ENCODE measurements at regions of chr21 and their contacts with region 1.

Region 1: DNA sequence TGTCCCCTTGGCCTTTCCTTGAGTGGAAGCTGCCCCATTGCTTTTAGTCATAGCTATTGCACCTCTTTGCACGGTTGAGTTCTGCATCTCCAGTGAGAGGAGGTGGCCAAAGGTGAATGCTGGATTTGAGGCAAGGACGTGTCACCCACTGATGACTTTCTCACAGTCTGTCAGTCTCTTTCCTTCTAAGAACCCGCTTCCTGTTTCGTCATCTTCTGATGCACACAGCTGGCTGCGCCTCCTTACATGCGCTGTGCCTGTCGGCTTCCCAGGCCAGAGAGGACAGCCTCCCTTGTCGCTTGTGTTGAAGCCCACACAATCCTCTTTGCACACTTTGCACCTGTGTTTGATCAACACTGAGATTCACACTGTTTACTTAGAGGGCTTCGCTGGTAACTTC is 41.8 kb upstream of the PWP2 start:
- DNase-seq: peak; percentile 85
- H3K4me3 Mint-ChIP-seq: peak overlapping the region; percentile 48
- H3K27ac Mint-ChIP-seq: peak overlapping the region; percentile 84
- H3K4me1 Mint-ChIP-seq: peaks cover 33% of the 10 kb centered on the region
- H3K27me3 Mint-ChIP-seq: no peaks in the 10 kb centered on the region

Region 2: GRCh38 chr21:43916691-43917514 is 148.5 kb before region 1 on chr21:
- CTCF ChIA-PET with region 1: no interaction called
- POLR2A ChIA-PET with region 1: no interaction called
- intact Hi-C with region 1: no loop called
- DNase-seq: peak; percentile 76
- H3K4me3 Mint-ChIP-seq: peak overlapping the region; percentile 68
- H3K27ac Mint-ChIP-seq: peak overlapping the region; percentile 76
- H3K4me1 Mint-ChIP-seq: peaks cover 52% of the 10 kb centered on the region
- H3K27me3 Mint-ChIP-seq: no peaks in the 10 kb centered on the region

Region 3: DNA sequence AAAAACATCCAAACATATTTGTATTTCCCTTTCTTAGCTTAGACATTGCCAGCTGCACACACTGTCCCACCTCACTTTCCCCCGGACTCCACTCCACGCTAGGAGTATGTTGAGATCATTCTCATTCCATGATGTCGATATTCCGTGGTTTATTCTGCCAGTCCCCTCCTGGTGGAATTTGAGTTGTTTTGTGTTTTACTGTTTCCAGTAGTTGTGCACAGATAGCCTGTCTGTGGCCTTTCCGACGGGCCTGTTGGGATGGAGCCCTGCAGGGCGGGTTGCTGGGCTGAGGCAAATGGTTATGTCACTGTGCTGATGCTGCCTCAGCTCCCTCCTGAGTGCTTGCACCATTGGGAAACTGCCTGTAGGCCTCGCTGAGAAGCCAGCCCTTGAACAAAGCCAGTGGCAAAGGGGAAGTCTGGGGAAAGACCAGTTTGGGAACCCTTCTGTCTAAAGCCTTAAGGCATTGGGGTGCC is 40.5 kb before region 1 on chr21:
- CTCF ChIA-PET with region 1: interaction called, 3 read pairs
- POLR2A ChIA-PET with region 1: interaction called, 4 read pairs
- intact Hi-C with region 1: loop called (anchors 5 kb)
- DNase-seq: no peak
- H3K4me3 Mint-ChIP-seq: no peak overlapping the region
- H3K27ac Mint-ChIP-seq: peak overlapping the region; percentile 82
- H3K4me1 Mint-ChIP-seq: peaks cover 80% of the 10 kb centered on the region
- H3K27me3 Mint-ChIP-seq: no peaks in the 10 kb centered on the region

Region 4: GRCh38 chr21:44076284-44076683 is 10.9 kb after region 1 on chr21:
- CTCF ChIA-PET with region 1: interaction called, 5 read pairs
- POLR2A ChIA-PET with region 1: interaction called, 3 read pairs
- intact Hi-C with region 1: loop called (anchors 1 kb)
- DNase-seq: no peak
- H3K4me3 Mint-ChIP-seq: no peak overlapping the region
- H3K27ac Mint-ChIP-seq: peak overlapping the region; percentile 83
- H3K4me1 Mint-ChIP-seq: peaks cover 48% of the 10 kb centered on the region
- H3K27me3 Mint-ChIP-seq: no peaks in the 10 kb centered on the region

Region 5: GRCh38 chr21:44730951-44731579 is 665.6 kb after region 1 on chr21:
- CTCF ChIA-PET with region 1: no interaction called
- POLR2A ChIA-PET with region 1: no interaction called
- intact Hi-C with region 1: no loop called
- DNase-seq: no peak
- H3K4me3 Mint-ChIP-seq: no peak overlapping the region
- H3K27ac Mint-ChIP-seq: no peak overlapping the region
- H3K4me1 Mint-ChIP-seq: no peaks in the 10 kb centered on the region
- H3K27me3 Mint-ChIP-seq: peaks cover 11% of the 10 kb centered on the region